ENCODE measurements at regions of chr1 and their contacts with region 1.

Region 1: DNA sequence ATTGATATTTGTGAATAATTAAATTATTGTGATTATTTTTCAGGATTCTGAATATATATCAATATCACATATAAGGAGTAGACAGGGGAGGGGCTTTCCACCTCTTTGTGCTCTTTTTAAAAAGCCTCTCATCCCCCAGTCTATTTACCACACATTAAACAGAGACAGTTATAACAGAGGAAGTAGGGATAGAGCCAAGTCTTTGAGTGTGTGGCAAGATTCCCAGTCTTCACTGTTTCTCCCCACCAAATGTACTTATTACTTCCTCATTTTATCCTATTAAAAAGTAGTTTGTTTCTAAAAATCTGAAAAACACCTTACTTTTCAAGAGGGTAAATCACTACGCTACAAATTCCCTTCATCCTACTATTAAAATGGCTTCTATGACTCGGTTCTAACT is 46.7 kb downstream of the EPS15 start:
- H3K4me3 Mint-ChIP-seq: no peak overlapping the region
- H3K27ac Mint-ChIP-seq: peak overlapping the region; percentile 95
- H3K4me1 Mint-ChIP-seq: peaks cover 60% of the 10 kb centered on the region
- H3K27me3 Mint-ChIP-seq: no peaks in the 10 kb centered on the region

Region 2: GRCh38 chr1:51519048-51519864 is 46.9 kb after region 1 on chr1 and contains the start of gene EPS15:
- intact Hi-C with region 1: loop called (anchors 5 kb)
- H3K4me3 Mint-ChIP-seq: peak within 1 kb of the TSS; percentile 97
- H3K27ac Mint-ChIP-seq: peak within 1 kb of the TSS; percentile 97
- H3K4me1 Mint-ChIP-seq: peaks cover 28% of the 10 kb centered on the region
- H3K27me3 Mint-ChIP-seq: no peaks in the 10 kb centered on the region